ENCODE measurements at regions of chr14 and their contacts with region 1.

Region 1: DNA sequence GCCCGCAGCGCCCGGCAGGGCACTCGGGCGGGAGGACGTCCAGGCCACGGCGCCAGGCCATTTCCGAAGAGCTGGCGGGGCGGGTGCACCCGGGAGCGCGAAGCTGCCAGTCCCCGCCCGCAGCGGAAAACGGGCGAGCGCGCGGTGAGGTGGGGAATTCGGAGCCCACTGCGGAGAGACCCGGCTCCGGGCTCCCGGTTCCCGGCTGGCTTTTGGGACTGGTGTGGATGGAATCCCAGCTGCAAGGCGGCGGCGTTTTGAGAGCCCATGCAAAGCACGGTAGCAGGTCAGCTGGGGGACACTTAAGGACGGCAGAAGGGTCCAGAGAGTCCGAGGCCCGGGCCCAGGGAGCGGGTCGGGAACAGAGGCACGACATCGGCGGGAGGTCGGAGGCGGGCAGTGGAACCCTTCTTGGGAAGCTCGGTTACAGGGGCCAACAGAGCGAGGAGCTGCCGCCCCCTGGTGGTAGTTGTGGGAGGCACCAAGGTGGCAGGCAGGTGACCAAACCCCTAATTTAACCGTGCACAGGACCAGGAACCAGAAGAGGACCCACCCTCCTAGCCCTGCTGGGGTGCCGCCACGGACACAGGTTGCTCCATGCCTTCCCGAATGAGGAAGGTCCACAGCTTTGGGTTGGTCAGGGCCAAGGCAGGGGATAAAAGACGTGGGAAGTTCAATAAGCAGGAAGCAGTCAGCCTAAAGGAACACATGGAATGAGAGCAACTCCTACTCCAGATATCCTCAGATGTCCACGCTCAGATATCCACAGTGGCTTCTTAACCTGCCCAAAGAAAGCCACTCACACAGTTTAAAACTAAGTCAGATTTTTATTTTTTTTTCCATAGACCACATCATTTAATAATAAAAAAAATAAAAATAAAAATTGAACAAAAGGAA is 685 bp upstream of the CDH24 start:
- DNase-seq: peak; percentile 71 to 89 (median 83)
- ATAC-seq: peak; percentile 81
- H3K4me3 ChIP-seq: peak overlapping the region; percentile 67
- H3K4me3 Mint-ChIP-seq: peak overlapping the region; percentile 78 to 91 (median 87)
- H3K27ac ChIP-seq: peak overlapping the region; percentile 49
- H3K27ac Mint-ChIP-seq: peak overlapping the region in 7 of 9 donors; percentile 23 to 85 (median 58)
- H3K4me1 ChIP-seq: peaks cover 7 to 9% of the 10 kb centered on the region in 2 donors
- H3K4me1 Mint-ChIP-seq: peaks cover 13 to 20% (median 17%) of the 10 kb centered on the region in 7 donors
- H3K27me3 ChIP-seq: no peaks in the 10 kb centered on the region
- H3K27me3 Mint-ChIP-seq: peaks cover 0 to 8% (median 0%) of the 10 kb centered on the region in 5 donors

Region 2: GRCh38 chr14:21383848-21384493 is 1674.0 kb before region 1 on chr14 and contains the start of gene SUPT16H:
- CTCF ChIA-PET with region 1: no interaction called
- POLR2A ChIA-PET with region 1: no interaction called
- intact Hi-C with region 1: no loop called
- DNase-seq: peak; percentile 78 to 91 (median 86)
- ATAC-seq: peak; percentile 97
- H3K4me3 ChIP-seq: peak within 1 kb of the TSS; percentile 98
- H3K4me3 Mint-ChIP-seq: peak within 1 kb of the TSS; percentile 92 to 99 (median 97)
- H3K27ac ChIP-seq: peak within 1 kb of the TSS; percentile 87
- H3K27ac Mint-ChIP-seq: peak within 1 kb of the TSS; percentile 97 to 100 (median 99)
- H3K4me1 ChIP-seq: peaks cover 3 to 11% of the 10 kb centered on the region in 2 donors
- H3K4me1 Mint-ChIP-seq: peaks cover 26 to 52% (median 45%) of the 10 kb centered on the region in 7 donors
- H3K27me3 ChIP-seq: no peaks in the 10 kb centered on the region
- H3K27me3 Mint-ChIP-seq: no peaks in the 10 kb centered on the region
- total RNA-seq, gene SUPT16H: 46.1 to 104 (median 78.6) TPM

Region 3: GRCh38 chr14:22726012-22726411 is 332.0 kb before region 1 on chr14:
- CTCF ChIA-PET with region 1: no interaction called
- POLR2A ChIA-PET with region 1: no interaction called
- intact Hi-C with region 1: no loop called
- DNase-seq: no peak
- ATAC-seq: no peak
- H3K4me3 ChIP-seq: no peak overlapping the region
- H3K4me3 Mint-ChIP-seq: no peak overlapping the region
- H3K27ac ChIP-seq: no peak overlapping the region
- H3K27ac Mint-ChIP-seq: no peak overlapping the region
- H3K4me1 ChIP-seq: no peaks in the 10 kb centered on the region
- H3K4me1 Mint-ChIP-seq: peaks cover 0 to 3% (median 0%) of the 10 kb centered on the region in 7 donors
- H3K27me3 ChIP-seq: no peaks in the 10 kb centered on the region
- H3K27me3 Mint-ChIP-seq: peaks cover 0 to 7% (median under 1%) of the 10 kb centered on the region in 5 donors

Region 4: DNA sequence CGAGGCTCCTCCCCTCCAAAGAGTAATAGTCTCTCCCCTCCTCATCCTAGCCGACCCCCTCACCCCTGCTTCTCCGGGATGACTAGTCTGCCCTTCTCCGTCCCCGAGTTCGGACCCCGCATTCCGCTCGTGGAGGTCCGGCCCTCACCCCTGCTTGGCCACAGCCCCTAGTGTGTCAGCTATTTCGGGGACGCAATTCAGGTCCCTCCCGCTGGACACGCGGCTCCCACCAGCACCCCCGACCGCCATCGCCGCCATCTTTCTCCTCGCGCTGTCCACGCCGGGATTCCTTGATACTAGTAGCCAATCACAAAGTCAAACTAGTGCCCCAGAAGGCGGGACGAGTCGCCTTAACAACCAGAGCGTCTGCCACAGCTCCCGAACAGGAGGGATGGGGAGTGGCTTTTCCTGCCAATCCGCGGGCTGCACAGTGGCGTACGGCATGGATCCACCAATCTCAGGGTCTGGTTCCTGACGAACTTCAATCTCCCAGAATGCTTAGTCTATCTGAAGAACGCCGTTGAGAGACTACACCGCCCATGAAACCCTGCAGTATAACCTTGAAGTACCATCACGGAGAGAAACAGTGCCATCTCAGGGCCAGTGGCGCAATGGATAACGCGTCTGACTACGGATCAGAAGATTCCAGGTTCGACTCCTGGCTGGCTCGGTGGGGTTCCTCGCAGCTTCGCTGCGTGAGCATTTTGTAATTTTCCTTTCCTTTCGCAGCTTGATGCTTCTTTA is 128.7 kb before region 1 on chr14 and contains the start of gene PRMT5:
- CTCF ChIA-PET with region 1: interaction called, 5 read pairs
- POLR2A ChIA-PET with region 1: no interaction called
- intact Hi-C with region 1: loop called (anchors 1 kb)
- DNase-seq: peak; percentile 81 to 100 (median 99)
- ATAC-seq: peak; percentile 97
- H3K4me3 ChIP-seq: peak within 1 kb of the TSS; percentile 91
- H3K4me3 Mint-ChIP-seq: no peak within 1 kb of the TSS
- H3K27ac ChIP-seq: peak within 1 kb of the TSS; percentile 91
- H3K27ac Mint-ChIP-seq: no peak within 1 kb of the TSS
- H3K4me1 ChIP-seq: peaks cover 9 to 17% of the 10 kb centered on the region in 2 donors
- H3K4me1 Mint-ChIP-seq: peaks cover 5 to 36% (median 20%) of the 10 kb centered on the region in 7 donors
- H3K27me3 ChIP-seq: no peaks in the 10 kb centered on the region
- H3K27me3 Mint-ChIP-seq: no peaks in the 10 kb centered on the region
- total RNA-seq, gene PRMT5: 24.9 to 82.8 (median 34.2) TPM

Region 5: DNA sequence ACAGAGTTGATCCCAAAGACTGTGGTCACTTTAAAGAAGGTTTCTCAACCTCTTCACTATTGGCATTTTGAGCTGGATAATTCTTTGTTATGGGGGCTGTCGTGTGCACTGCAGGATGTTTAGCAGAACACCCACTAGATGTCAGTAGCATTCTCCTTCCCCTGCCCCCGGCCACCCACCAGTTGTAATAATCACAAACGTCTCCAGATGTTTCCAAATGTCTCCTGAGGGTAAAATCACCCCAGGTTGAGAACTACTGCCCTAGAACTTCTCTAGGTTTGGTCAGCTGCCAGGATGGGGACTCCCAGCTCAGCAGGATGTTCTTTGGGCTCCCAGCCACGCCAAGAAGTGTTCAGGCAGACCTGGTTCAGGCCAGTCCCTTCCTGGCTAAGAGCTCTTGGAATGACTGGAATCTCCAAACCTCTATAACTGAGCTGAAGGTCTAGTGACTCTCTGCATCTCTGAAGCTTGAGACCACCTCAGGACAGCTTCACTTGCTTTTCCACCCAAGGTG is 63.2 kb before region 1 on chr14:
- CTCF ChIA-PET with region 1: interaction called, 264 read pairs
- POLR2A ChIA-PET with region 1: interaction called, 76 read pairs
- intact Hi-C with region 1: loop called (anchors 1 kb)
- DNase-seq: peak in 5 of 9 donors; percentile 39 to 61 (median 53)
- ATAC-seq: peak; percentile 79
- H3K4me3 ChIP-seq: no peak overlapping the region
- H3K4me3 Mint-ChIP-seq: no peak overlapping the region
- H3K27ac ChIP-seq: no peak overlapping the region
- H3K27ac Mint-ChIP-seq: no peak overlapping the region
- H3K4me1 ChIP-seq: no peaks in the 10 kb centered on the region
- H3K4me1 Mint-ChIP-seq: peaks cover 0 to 5% (median 3%) of the 10 kb centered on the region in 7 donors
- H3K27me3 ChIP-seq: no peaks in the 10 kb centered on the region
- H3K27me3 Mint-ChIP-seq: no peaks in the 10 kb centered on the region

Region 6: DNA sequence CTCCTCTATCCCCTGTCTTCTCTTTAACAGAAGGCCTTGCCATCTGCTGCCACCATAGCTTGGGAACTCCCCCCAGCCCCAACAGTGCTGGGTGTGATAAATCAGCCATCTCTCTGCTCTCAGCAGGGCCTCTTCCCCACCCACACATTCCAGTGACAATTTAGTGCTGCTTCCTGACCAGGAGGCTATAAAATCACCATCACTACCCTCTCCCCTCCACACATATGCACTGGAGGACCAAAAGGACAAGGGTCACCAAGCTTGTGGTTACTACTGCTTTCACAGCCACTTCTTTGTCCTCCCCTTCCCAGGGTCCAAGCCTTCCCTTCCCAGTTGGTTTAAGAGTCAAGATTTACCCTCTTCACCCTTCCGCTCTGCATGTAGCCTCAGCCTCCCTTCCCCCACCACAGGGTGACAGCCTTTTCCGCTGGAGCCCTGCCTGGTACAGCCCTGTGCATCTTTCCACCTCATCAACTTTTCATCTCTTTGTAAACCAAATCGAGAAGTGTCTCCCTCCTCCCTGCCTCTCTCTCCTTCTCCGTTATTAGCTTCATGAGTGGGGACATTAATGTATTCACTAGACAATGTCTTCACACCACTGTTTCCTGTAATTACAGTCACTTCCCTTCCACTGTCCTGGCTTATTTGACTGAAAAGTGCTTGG is 32.7 kb before region 1 on chr14:
- CTCF ChIA-PET with region 1: interaction called, 10 read pairs
- POLR2A ChIA-PET with region 1: interaction called, 4 read pairs
- intact Hi-C with region 1: loop called in 1 of 2 experiments (anchors 5 kb)
- DNase-seq: no peak
- ATAC-seq: no peak
- H3K4me3 ChIP-seq: no peak overlapping the region
- H3K4me3 Mint-ChIP-seq: peak overlapping the region; percentile 4 to 78 (median 50)
- H3K27ac ChIP-seq: no peak overlapping the region
- H3K27ac Mint-ChIP-seq: peak overlapping the region; percentile 23 to 94 (median 86)
- H3K4me1 ChIP-seq: peaks cover 0 to 72% of the 10 kb centered on the region in 2 donors
- H3K4me1 Mint-ChIP-seq: peaks cover 49 to 83% (median 75%) of the 10 kb centered on the region in 7 donors
- H3K27me3 ChIP-seq: no peaks in the 10 kb centered on the region
- H3K27me3 Mint-ChIP-seq: no peaks in the 10 kb centered on the region

Region 7: DNA sequence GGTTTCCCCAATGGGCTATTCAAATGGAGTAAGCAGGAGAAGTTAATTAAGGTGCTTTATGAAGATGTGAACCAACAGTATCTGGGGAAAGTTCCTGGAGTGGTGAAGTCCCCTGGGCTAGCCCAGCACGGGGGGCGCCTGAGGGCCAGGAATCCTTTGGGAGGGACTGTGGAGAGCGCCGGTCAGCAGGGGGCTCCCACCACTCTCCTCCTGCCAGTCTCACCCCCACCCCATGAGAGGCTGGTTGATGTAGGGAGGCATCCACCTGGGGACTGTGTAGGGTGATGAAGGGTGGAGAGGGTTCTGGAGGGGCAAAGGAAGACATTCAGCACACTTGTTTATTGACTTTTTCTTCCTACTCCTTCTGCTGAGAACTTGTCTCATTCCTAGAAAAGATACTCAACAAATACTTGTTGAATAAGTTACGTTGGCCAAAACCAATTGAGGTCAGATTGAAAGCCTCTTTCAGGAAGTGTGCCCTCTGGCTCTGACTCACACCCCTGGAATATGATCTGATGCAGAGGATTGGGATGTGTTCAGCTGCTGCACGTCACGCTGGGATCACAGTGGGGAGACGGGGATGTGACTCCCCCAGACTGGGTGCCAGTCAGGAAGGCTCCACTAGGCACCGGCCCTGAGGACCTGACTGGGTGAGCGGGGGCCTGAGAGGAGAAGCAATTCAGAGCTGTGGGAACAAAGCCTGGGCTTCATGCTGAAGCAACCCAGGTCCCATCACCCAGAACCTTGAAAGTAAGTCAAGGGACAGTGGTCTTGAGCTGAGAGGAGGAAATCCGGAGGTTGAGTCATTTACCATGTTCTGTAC is 56.9 kb after region 1 on chr14:
- CTCF ChIA-PET with region 1: no interaction called
- POLR2A ChIA-PET with region 1: no interaction called
- intact Hi-C with region 1: no loop called
- DNase-seq: no peak
- ATAC-seq: no peak
- H3K4me3 ChIP-seq: no peak overlapping the region
- H3K4me3 Mint-ChIP-seq: no peak overlapping the region
- H3K27ac ChIP-seq: no peak overlapping the region
- H3K27ac Mint-ChIP-seq: peak overlapping the region in 7 of 9 donors; percentile 8 to 94 (median 63)
- H3K4me1 ChIP-seq: peaks cover 6 to 23% of the 10 kb centered on the region in 2 donors
- H3K4me1 Mint-ChIP-seq: peaks cover 16 to 54% (median 32%) of the 10 kb centered on the region in 7 donors
- H3K27me3 ChIP-seq: no peaks in the 10 kb centered on the region
- H3K27me3 Mint-ChIP-seq: peaks cover 0 to 7% (median 0%) of the 10 kb centered on the region in 5 donors

Region 8: GRCh38 chr14:23202001-23202400 is 144.0 kb after region 1 on chr14:
- CTCF ChIA-PET with region 1: no interaction called
- POLR2A ChIA-PET with region 1: no interaction called
- intact Hi-C with region 1: no loop called
- DNase-seq: no peak
- ATAC-seq: no peak
- H3K4me3 ChIP-seq: no peak overlapping the region
- H3K4me3 Mint-ChIP-seq: no peak overlapping the region
- H3K27ac ChIP-seq: no peak overlapping the region
- H3K27ac Mint-ChIP-seq: no peak overlapping the region
- H3K4me1 ChIP-seq: no peaks in the 10 kb centered on the region
- H3K4me1 Mint-ChIP-seq: no peaks in the 10 kb centered on the region
- H3K27me3 ChIP-seq: no peaks in the 10 kb centered on the region
- H3K27me3 Mint-ChIP-seq: peaks cover 0 to 27% (median under 1%) of the 10 kb centered on the region in 5 donors

Measured in naive thymus-derived CD4-positive, alpha-beta T cell (primary cell).